ENCODE measurements at regions of chr3 and their contacts with region 1.

Region 1: DNA sequence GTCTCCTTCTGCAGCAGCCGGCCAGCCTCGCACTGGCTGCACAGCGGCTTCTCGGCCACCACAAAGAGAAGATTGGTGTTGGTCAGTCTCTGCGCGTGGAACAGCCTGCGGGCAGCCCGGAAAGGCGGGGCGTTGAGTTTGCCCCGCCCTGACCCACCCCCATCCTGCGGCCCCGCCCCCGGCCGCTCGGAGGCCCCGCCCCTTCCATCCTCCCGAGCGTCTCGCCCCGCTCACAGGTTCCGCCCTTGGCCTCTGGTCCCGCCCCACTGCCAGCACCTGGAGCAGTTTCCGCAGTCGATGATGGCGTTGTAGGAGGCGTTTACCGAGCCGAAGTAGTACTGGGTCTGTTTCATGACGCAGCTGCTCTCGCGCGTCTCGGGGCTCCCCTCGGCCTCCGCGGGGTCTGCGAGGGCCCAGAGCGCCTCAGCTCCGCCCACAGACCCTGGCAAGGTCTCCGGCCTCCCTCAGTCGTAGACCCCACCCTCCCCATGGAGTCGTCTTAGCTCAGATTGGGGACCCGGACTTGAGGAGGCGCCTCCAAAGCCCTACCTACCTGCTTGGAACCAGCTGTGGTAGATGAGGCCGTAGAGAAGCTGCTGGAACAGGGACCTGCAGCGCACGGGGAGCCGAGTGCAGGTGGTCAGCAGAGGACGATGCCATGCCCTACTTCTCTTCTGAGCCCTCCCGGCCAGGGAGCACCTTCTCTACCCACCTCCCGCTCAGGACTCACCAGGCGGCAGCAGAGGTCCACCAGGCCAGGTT is 5.9 kb upstream of the TMEM115 start:
- DNase-seq: peak; percentile 98
- ATAC-seq: peak; percentile 99
- H3K4me3 Mint-ChIP-seq: peak overlapping the region; percentile 72
- H3K27ac Mint-ChIP-seq: peak overlapping the region; percentile 74
- H3K4me1 Mint-ChIP-seq: peaks cover 13% of the 10 kb centered on the region
- H3K27me3 Mint-ChIP-seq: no peaks in the 10 kb centered on the region

Region 2: DNA sequence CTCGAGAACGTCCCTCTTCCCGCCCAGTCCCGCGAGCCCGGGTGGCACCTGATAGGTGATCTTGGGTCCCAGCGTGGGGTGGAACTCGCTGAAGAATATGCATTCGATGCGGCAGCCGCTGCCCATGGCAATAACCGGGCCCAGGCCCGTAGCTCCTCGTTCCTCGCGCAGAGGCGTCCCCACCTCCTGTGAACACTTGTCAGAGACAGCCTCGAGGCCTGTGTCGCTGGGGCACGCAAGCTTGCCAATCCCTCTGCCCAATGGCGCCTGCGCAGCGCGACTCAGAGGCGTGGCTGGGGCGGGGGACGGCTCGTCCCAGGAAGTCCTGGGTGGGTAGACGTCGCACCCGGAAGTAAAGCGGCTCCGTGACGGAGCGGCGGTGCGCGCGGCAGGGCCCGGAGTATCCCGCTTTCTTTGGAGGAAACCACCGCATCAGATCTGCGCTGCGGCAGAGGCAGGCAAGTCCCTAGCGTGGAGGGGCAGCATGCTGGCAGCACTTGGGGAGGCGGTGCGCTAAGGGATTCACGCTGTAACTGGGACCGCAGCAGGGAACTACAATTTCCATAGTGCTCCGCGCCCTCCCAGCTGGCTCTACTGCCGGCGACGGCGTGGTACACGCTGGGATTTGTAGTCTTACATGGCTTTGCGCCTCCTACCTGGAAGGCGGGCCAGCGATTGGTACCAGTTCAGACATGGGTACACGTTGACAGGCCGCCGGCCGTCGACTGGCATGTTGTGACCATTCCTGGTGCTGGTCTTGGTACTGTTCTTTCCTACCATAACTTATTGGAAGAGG is 14.5 kb before region 1 on chr3 and contains the starts of genes CYB561D2 and NPRL2:
- CTCF ChIA-PET with region 1: interaction called, 6 read pairs
- POLR2A ChIA-PET with region 1: interaction called, 5 read pairs
- intact Hi-C with region 1: loop called (anchors 2 kb)
- DNase-seq: peak; percentile 99
- ATAC-seq: peak; percentile 90
- H3K4me3 Mint-ChIP-seq: peak within 1 kb of the TSS; percentile 90
- H3K27ac Mint-ChIP-seq: peak within 1 kb of the TSS; percentile 97
- H3K4me1 Mint-ChIP-seq: peaks cover 55% of the 10 kb centered on the region
- H3K27me3 Mint-ChIP-seq: no peaks in the 10 kb centered on the region
- total RNA-seq, gene CYB561D2: 10.3 to 14.3 TPM
- total RNA-seq, gene NPRL2: 42.5 to 43.0 TPM

Measured in activated CD4-positive, alpha-beta T cell treated with anti-CD3 and anti-CD28 coated beads for 36 hours (primary cell).